ENCODE measurements at regions of chr11 and their contacts with region 1.

Region 1: DNA sequence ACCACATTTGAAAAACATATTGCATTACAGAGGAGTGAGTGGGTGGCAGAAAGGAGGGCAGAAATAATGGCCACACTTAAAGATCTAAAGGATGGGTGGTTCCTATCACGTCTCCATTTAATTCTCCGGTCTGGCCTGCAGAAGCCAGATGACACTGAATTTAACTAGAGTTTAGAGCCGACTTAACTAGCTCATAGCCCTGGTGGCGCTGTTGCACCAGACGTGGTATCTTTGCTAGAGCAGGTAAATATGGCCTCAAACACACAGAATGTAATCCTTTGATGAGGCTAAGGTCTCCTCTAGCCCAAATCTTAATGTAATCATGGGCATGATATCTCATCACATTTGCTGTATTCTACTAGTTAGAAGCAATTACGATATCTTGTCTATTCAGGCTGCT is 51.5 kb upstream of the GAL start:
- DNase-seq: peak in 12 of 14 experiments; percentile 26 to 71 (median 36)
- ATAC-seq: peak; percentile 48
- H3K4me3 ChIP-seq: no peak overlapping the region
- H3K4me3 Mint-ChIP-seq: no peak overlapping the region
- H3K27ac ChIP-seq: no peak overlapping the region
- H3K27ac Mint-ChIP-seq: no peak overlapping the region
- H3K4me1 ChIP-seq: no peaks in the 10 kb centered on the region
- H3K4me1 Mint-ChIP-seq: no peaks in the 10 kb centered on the region
- H3K27me3 ChIP-seq: no peaks in the 10 kb centered on the region
- H3K27me3 Mint-ChIP-seq: peaks cover 9% of the 10 kb centered on the region
- CTCF ChIP-seq: peak; percentile 25

Region 2: GRCh38 chr11:68798221-68798813 is 165.5 kb after region 1 on chr11:
- CTCF ChIA-PET with region 1: no interaction called
- POLR2A ChIA-PET with region 1: no interaction called
- intact Hi-C with region 1: loop called in 1 of 2 experiments (anchors 5 kb)
- DNase-seq: peak; percentile 14 to 66 (median 33)
- ATAC-seq: no peak
- H3K4me3 ChIP-seq: no peak overlapping the region
- H3K4me3 Mint-ChIP-seq: no peak overlapping the region
- H3K27ac ChIP-seq: no peak overlapping the region
- H3K27ac Mint-ChIP-seq: no peak overlapping the region
- H3K4me1 ChIP-seq: no peaks in the 10 kb centered on the region
- H3K4me1 Mint-ChIP-seq: no peaks in the 10 kb centered on the region
- H3K27me3 ChIP-seq: no peaks in the 10 kb centered on the region
- H3K27me3 Mint-ChIP-seq: no peaks in the 10 kb centered on the region
- CTCF ChIP-seq: peak; percentile 71

Measured in CD4-positive, alpha-beta T cell (primary cell).